Sciatic nerve (tissue), 2 donors: ENCODE measurements at regions of chr12 and their contacts with region 1.

Region 1: GRCh38 chr12:95815635-95816212 is 25.2 kb upstream of the NTN4 start:
- DNase-seq: no peak
- ATAC-seq: peak; percentile 76

Region 2: DNA sequence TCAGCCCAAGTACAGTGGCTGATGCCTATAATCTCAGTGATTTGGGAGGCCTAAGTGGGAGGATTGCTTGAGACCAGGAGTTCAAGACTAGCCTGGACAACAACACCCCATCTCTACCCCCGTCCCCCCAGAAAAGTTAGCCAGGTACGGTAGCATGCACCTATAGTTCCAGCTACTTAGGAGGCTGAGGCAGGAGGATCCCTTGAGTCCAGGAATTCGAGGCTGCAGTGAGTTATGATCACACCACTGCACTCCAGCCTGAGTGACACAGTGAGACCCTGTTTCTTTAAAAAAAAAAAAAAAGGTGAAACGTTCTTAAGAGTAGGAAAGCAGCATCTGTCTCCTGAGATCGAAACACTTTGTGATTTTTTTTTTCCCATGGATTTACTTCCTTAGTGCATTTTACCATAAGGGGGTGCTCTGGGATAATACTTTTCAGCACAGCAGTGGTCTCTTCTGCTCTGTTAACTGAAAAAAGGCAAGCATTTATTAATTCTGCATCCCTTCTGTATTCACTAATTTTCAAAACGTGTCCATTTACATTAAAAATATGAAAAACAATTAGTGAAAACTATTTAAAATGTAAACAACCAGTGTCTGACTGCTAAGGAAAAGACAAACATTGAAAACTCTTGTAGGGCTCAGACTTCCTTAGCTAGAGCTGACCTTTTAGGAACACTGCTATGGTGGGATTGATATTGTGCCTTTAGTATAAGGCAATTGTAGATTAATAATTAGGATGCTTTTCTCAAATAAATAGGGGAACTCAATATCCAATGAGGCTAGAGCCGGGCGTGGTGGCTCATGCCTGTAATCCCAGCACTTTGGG is 233.3 kb before region 1 on chr12:
- intact Hi-C with region 1: loop called (anchors 5 kb)
- DNase-seq: no peak
- ATAC-seq: peak; percentile 80

Region 3: DNA sequence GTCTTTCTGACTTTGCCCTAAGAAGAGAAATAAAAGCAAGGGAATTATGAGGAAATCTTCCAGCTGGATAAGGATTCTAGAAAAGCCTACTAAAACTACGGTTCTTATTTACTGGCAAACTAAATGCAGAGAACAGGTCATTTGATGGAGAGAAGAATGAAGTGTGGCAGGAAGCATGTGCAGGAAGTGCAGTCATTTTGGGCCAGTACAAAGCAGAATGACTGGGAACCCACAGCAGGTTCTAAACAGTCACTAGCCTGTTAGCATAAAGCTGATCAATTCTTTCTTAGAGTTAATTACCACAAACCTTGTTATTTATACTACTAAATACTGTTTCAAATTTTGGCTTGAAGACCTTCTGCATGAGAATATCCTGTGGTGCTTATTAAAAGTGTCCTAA is 710.4 kb after region 1 on chr12:
- intact Hi-C with region 1: no loop called
- DNase-seq: no peak
- ATAC-seq: no peak